Stomach (tissue), 19 donors: ENCODE measurements at regions of chr1 and their contacts with region 1.

Region 1: DNA sequence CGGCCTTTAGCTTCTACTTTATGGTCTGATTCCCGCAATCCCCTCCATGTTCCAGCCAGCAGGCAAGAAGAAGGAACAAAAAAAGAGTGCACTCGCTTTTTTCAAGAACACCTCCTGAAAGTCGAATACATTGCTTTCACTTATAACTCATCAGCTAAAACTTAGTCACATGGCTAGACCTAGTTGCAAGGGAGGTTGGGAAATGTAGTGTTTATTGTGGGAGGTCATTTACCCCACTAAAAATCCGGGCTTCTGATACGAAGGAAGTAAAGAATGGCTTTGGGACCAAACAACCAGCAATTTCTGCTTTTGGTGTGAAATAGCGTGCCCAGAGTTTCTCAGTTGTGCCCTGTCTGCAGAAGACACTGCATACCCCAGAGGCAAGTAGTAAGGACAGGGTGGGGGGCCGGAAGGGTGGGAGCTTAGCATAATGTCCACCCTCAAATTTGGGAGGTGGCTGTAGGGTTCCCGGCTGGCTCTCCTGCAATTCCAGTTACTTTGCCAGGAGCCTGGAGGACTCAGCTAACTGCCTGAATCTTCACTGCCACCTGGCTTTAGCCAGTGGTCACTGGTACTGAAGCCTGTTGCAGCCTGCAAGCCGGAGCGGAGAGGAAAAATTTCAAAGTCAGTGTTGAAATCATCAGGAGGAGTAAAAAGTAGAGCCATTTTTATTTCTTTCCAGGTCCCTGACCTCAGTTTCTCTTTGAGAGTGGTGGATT is 57.7 kb upstream of the F3 start:
- DNase-seq: peak; percentile 62 to 78
- H3K4me3 ChIP-seq: no peak overlapping the region
- H3K27ac ChIP-seq: peak overlapping the region in 3 of 5 donors; percentile 3 to 47 (median 38)
- H3K4me1 ChIP-seq: peaks cover 10 to 37% (median 28%) of the 10 kb centered on the region in 4 donors
- H3K27me3 ChIP-seq: no peaks in the 10 kb centered on the region
- CTCF ChIP-seq: peak in 5 of 7 experiments; percentile 61 to 84 (median 66)
- EP300 ChIP-seq: no peak
- POLR2A ChIP-seq: no peak

Region 2: DNA sequence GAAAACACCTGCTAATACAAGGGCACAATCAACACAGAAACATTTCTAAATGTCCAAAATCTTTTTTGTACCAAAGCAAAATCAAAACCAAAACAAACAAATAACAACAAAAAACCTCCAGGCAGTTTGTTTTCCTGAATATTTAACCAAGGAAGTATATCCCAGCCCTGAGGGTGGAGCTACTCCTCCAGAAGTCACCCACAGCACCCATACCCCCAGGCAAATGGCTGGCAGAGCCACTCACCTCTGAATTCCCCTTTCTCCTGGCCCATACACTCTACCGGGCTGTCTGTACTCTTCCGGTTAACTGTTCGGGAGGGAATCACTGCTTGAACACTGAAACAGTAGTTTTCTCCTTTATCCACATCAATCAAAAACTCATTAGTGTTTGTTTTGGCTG is 67.2 kb before region 1 on chr1:
- intact Hi-C with region 1: loop called (anchors 10 kb)
- DNase-seq: no peak
- H3K4me3 ChIP-seq: no peak overlapping the region
- H3K27ac ChIP-seq: peak overlapping the region in 2 of 5 donors; percentile 4 to 7
- H3K4me1 ChIP-seq: peaks cover 0 to 36% (median 12%) of the 10 kb centered on the region in 4 donors
- H3K27me3 ChIP-seq: no peaks in the 10 kb centered on the region
- CTCF ChIP-seq: no peak
- EP300 ChIP-seq: no peak
- POLR2A ChIP-seq: no peak

Region 3: GRCh38 chr1:94773931-94774422 is 174.7 kb after region 1 on chr1:
- intact Hi-C with region 1: no loop called
- DNase-seq: peak in 1 of 2 donors; percentile 69
- H3K4me3 ChIP-seq: no peak overlapping the region
- H3K27ac ChIP-seq: peak overlapping the region in 1 of 5 donors; percentile 72
- H3K4me1 ChIP-seq: peaks cover 0 to 30% (median 20%) of the 10 kb centered on the region in 4 donors
- H3K27me3 ChIP-seq: no peaks in the 10 kb centered on the region
- CTCF ChIP-seq: no peak
- EP300 ChIP-seq: no peak
- POLR2A ChIP-seq: no peak